Activated CD4-positive, alpha-beta T cell treated with anti-CD3 and anti-CD28 coated beads, Interleukin-2, amount 10 ng/mL, durations not matched to agents 24 days and 14 days (primary cell): ENCODE measurements at regions of chr6 and their contacts with region 1.

Region 1: GRCh38 chr6:30717042-30717844 is at the start of gene MDC1:
- DNase-seq: peak; percentile 99
- H3K4me3 Mint-ChIP-seq: peak within 1 kb of the TSS; percentile 95
- H3K27ac Mint-ChIP-seq: peak within 1 kb of the TSS; percentile 99
- H3K4me1 Mint-ChIP-seq: peaks cover 45% of the 10 kb centered on the region
- H3K27me3 Mint-ChIP-seq: no peaks in the 10 kb centered on the region
- total RNA-seq, gene MDC1: 93.9 and 97.2 TPM in 2 replicates

Region 2: GRCh38 chr6:30571075-30571768 is 146.0 kb before region 1 on chr6 and contains the start of gene ABCF1:
- intact Hi-C with region 1: loop called (anchors 2 kb)
- DNase-seq: peak; percentile 100
- H3K4me3 Mint-ChIP-seq: peak within 1 kb of the TSS; percentile 92
- H3K27ac Mint-ChIP-seq: peak within 1 kb of the TSS; percentile 99
- H3K4me1 Mint-ChIP-seq: peaks cover 59% of the 10 kb centered on the region
- H3K27me3 Mint-ChIP-seq: no peaks in the 10 kb centered on the region
- total RNA-seq, gene ABCF1: 123 and 125 TPM in 2 replicates

Region 3: GRCh38 chr6:30646458-30647241 is 70.6 kb before region 1 on chr6 and contains the start of gene C6orf136:
- intact Hi-C with region 1: loop called (anchors 2 kb)
- DNase-seq: peak; percentile 97
- H3K4me3 Mint-ChIP-seq: peak within 1 kb of the TSS; percentile 91
- H3K27ac Mint-ChIP-seq: peak within 1 kb of the TSS; percentile 94
- H3K4me1 Mint-ChIP-seq: peaks cover 28% of the 10 kb centered on the region
- H3K27me3 Mint-ChIP-seq: no peaks in the 10 kb centered on the region
- total RNA-seq, gene C6orf136: 28.9 and 39.4 TPM in 2 replicates

Region 4: GRCh38 chr6:30657454-30657853 is 59.8 kb before region 1 on chr6:
- intact Hi-C with region 1: no loop called
- DNase-seq: no peak
- H3K4me3 Mint-ChIP-seq: no peak overlapping the region
- H3K27ac Mint-ChIP-seq: no peak overlapping the region
- H3K4me1 Mint-ChIP-seq: peaks cover 4% of the 10 kb centered on the region
- H3K27me3 Mint-ChIP-seq: no peaks in the 10 kb centered on the region

Region 5: DNA sequence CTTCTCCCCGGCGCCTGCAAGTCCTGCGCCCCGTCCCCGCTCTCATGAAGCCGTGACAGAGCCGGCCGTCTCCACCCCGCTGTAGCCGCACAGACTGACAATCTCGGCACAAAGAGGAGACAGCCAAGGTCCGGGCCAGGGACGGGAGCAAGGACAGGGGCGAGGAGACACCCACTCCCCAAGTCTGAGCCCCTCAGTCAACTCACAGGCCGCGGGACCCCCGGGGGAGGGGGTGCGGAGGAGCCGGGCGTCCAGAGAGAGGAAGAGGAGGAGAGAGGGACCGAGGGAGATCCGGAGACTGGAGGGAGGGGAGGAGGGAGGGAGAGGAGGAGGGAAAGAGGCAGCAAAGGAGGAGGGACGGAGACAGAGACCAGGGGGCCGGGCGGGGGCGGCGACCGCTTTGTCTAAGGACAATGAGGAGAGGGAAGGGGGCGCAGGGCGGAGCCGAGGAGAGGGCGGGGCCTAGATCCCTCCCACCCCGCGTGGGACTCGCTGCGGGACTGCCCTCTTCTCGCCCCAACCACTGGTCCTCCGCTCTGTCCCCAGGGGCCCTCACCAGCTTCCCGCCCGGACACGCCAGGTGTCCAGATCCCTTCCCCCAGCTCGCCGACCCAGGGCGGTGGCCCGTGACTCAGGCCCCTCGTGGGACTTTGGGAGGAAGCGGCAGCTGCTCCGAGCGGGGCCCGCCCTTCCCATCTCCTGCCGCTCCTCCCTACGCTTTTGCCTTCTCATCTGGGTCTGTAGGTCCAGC is 30.2 kb before region 1 on chr6:
- intact Hi-C with region 1: loop called (anchors 1 kb)
- DNase-seq: peak; percentile 96
- H3K4me3 Mint-ChIP-seq: peak overlapping the region; percentile 94
- H3K27ac Mint-ChIP-seq: peak overlapping the region; percentile 93
- H3K4me1 Mint-ChIP-seq: peaks cover 53% of the 10 kb centered on the region
- H3K27me3 Mint-ChIP-seq: no peaks in the 10 kb centered on the region

Region 6: GRCh38 chr6:30730601-30731435 is 13.6 kb after region 1 on chr6:
- intact Hi-C with region 1: loop called (anchors 1 kb)
- DNase-seq: peak; percentile 95
- H3K4me3 Mint-ChIP-seq: peak overlapping the region; percentile 75
- H3K27ac Mint-ChIP-seq: peak overlapping the region; percentile 87
- H3K4me1 Mint-ChIP-seq: peaks cover 49% of the 10 kb centered on the region
- H3K27me3 Mint-ChIP-seq: no peaks in the 10 kb centered on the region

Region 7: DNA sequence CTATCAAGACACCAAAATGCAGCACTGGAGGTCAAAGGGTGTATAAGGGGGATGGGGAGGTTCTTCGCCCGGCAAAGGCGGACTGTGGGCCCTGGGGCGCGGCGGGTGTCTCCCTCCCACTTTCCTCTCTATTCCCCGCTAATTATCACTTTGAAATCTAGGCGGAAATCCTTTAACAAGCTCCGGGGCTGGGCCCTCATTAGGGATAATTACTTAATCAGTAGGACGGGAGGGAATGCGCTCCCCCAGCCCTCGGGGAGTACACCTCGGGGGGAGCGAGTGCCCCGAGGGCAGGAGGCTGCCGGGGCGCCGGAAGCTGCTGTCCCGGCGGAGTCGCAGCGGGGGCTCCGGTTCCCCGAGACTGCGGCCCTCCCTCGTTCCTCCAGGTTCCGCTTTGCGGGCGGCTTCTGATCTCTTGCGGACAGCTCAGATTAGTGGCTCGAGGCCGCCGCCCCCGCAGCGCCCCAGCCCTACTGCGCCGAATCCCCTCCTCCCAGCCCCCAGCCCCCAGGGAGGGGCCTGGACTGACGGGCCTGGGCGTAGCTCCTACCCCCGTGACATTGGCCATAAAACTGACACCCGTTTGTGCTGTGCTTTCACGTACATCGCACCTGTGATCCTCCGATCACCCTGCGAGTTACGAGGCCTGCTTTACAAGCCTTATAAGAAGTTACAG is 238.3 kb after region 1 on chr6:
- intact Hi-C with region 1: no loop called
- DNase-seq: peak; percentile 83
- H3K4me3 Mint-ChIP-seq: peak overlapping the region; percentile 73
- H3K27ac Mint-ChIP-seq: no peak overlapping the region
- H3K4me1 Mint-ChIP-seq: peaks cover 12% of the 10 kb centered on the region
- H3K27me3 Mint-ChIP-seq: peaks cover 77% of the 10 kb centered on the region

Region 8: DNA sequence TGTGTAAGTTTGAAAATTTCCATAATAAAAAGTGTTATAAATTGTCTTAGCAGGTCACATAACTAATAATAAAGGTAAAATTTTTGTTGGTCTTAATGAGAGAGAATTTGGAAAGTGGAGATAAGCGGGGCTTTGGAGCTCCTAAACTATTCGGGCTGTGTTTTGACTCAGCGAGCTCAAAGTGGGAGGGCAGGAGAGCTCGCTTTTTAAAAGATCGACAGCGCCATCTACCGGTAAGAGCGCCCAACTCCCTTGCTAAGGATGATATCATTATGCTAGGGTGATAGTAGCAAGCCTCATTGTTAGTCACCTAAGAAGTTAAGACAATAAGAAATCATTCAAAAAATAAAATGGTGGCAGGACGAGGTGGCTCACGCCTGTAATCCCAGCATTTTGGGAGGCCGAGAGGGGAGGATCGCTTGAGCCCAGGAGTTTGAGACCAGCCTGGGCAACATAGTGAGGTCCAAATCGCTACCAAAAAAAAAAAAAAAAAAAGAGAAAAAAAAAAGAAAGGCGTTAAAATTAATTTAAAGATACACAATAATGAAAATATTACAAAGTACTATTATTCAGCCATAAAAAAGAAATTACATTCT is 370.3 kb after region 1 on chr6:
- intact Hi-C with region 1: loop called (anchors 10 kb)
- DNase-seq: peak; percentile 96
- H3K4me3 Mint-ChIP-seq: no peak overlapping the region
- H3K27ac Mint-ChIP-seq: no peak overlapping the region
- H3K4me1 Mint-ChIP-seq: peaks cover 11% of the 10 kb centered on the region
- H3K27me3 Mint-ChIP-seq: peaks cover 16% of the 10 kb centered on the region